ENCODE measurements at regions of chr1 and their contacts with region 1.

Region 1: GRCh38 chr1:10694633-10695627 is 101.5 kb downstream of the CASZ1 start:
- DNase-seq: peak; percentile 60 to 93 (median 73)
- ATAC-seq: peak; percentile 64
- H3K4me3 ChIP-seq: peak overlapping the region; percentile 32 to 48
- H3K4me3 Mint-ChIP-seq: peak overlapping the region; percentile 83
- H3K27ac ChIP-seq: no peak overlapping the region
- H3K27ac Mint-ChIP-seq: peak overlapping the region; percentile 88
- H3K4me1 ChIP-seq: peaks cover 17% of the 10 kb centered on the region
- H3K4me1 Mint-ChIP-seq: peaks cover 13% of the 10 kb centered on the region
- H3K27me3 ChIP-seq: no peaks in the 10 kb centered on the region
- H3K27me3 Mint-ChIP-seq: no peaks in the 10 kb centered on the region
- CTCF ChIP-seq: no peak

Region 2: DNA sequence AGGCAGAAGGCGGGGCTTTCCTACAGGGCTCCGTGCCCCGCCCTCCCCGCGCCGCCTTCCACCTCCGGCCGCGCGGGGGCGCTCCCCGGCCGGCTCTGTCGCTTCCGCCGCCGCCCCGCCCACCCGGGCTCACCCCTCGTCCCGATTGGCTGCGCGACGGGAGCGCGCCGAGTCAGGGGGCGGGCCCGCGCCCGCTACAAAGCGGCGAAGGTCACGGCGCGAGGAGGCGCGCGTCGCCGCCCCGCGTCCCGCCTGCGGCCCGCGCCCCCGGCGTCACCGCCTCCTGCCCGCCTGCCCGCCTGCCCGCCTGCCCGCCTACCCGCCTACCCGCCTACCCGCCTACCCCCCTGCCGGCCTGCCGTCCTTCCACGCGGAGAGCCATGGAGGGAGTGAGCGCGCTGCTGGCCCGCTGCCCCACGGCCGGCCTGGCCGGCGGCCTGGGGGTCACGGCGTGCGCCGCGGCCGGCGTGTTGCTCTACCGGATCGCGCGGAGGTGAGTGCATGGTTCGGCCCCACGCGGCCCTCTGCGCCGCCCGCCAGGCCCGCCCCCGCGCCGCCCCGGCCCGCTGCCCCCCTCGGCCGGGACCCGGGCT is 1106.3 kb before region 1 on chr1 and contains the start of gene TMEM201:
- CTCF ChIA-PET with region 1: no interaction called
- POLR2A ChIA-PET with region 1: no interaction called
- intact Hi-C with region 1: loop called (anchors 5 to 10 kb)
- DNase-seq: peak; percentile 87 to 97 (median 95)
- ATAC-seq: peak; percentile 94
- H3K4me3 ChIP-seq: peak within 1 kb of the TSS; percentile 53 to 59
- H3K4me3 Mint-ChIP-seq: peak within 1 kb of the TSS; percentile 88
- H3K27ac ChIP-seq: peak within 1 kb of the TSS; percentile 21 to 32
- H3K27ac Mint-ChIP-seq: peak within 1 kb of the TSS; percentile 74
- H3K4me1 ChIP-seq: peaks cover 22% of the 10 kb centered on the region
- H3K4me1 Mint-ChIP-seq: peaks cover 24% of the 10 kb centered on the region
- H3K27me3 ChIP-seq: no peaks in the 10 kb centered on the region
- H3K27me3 Mint-ChIP-seq: no peaks in the 10 kb centered on the region
- CTCF ChIP-seq: peak; percentile 77
- total RNA-seq, gene TMEM201: 10.7 to 11.5 TPM

Region 3: GRCh38 chr1:10472220-10473144 is 222.4 kb before region 1 on chr1 and contains the start of gene DFFA:
- CTCF ChIA-PET with region 1: no interaction called
- POLR2A ChIA-PET with region 1: no interaction called
- intact Hi-C with region 1: loop called in 1 of 2 experiments (anchors 1 kb)
- DNase-seq: peak; percentile 83 to 96 (median 91)
- ATAC-seq: peak; percentile 75
- H3K4me3 ChIP-seq: peak within 1 kb of the TSS; percentile 62 to 81
- H3K4me3 Mint-ChIP-seq: peak within 1 kb of the TSS; percentile 92
- H3K27ac ChIP-seq: peak within 1 kb of the TSS; percentile 39 to 66
- H3K27ac Mint-ChIP-seq: peak within 1 kb of the TSS; percentile 90
- H3K4me1 ChIP-seq: peaks cover 34% of the 10 kb centered on the region
- H3K4me1 Mint-ChIP-seq: peaks cover 47% of the 10 kb centered on the region
- H3K27me3 ChIP-seq: no peaks in the 10 kb centered on the region
- H3K27me3 Mint-ChIP-seq: no peaks in the 10 kb centered on the region
- CTCF ChIP-seq: no peak
- total RNA-seq, gene DFFA: 10.0 to 10.4 TPM

Region 4: DNA sequence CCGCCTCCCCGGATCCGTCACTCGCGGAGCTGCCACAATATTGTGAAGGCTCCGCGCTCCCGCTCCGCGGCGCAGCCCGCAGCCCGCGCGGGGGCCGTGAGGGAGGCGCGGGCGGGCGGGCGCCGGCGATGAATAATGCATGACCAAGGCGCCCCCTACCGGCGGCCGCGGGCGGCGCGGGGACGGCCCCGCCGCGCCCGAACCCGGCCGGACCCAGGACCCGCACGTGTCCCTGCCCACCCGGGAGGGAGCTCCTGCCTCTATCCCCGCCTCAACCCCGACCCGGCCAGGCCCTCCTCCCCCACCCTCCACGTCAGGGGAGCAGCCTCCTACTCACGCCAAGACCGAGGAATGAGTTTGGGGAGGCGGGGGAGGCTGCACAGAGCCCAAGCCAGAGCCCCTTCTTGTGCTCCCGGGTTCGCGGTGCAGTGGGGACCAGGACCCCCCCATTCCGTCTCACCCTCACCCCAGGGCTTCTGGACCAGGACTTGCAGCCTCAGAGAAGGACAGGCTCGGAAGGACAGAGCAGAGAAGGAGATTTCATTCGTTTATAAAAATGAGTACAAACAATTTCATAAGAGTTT is 172.3 kb after region 1 on chr1:
- CTCF ChIA-PET with region 1: interaction called, 8 read pairs
- POLR2A ChIA-PET with region 1: no interaction called
- intact Hi-C with region 1: loop called (anchors 1 kb)
- DNase-seq: peak; percentile 23 to 82 (median 69)
- ATAC-seq: peak; percentile 81
- H3K4me3 ChIP-seq: peak overlapping the region; percentile 21 to 28
- H3K4me3 Mint-ChIP-seq: peak overlapping the region; percentile 57
- H3K27ac ChIP-seq: no peak overlapping the region
- H3K27ac Mint-ChIP-seq: no peak overlapping the region
- H3K4me1 ChIP-seq: peaks cover 12% of the 10 kb centered on the region
- H3K4me1 Mint-ChIP-seq: peaks cover 19% of the 10 kb centered on the region
- H3K27me3 ChIP-seq: peaks cover 2 to 15% of the 10 kb centered on the region in 2 experiments
- H3K27me3 Mint-ChIP-seq: peaks cover 52% of the 10 kb centered on the region
- CTCF ChIP-seq: peak; percentile 74

Region 5: GRCh38 chr1:10941891-10942541 is 247.1 kb after region 1 on chr1:
- CTCF ChIA-PET with region 1: interaction called, 5 read pairs
- POLR2A ChIA-PET with region 1: no interaction called
- intact Hi-C with region 1: loop called (anchors 1 kb)
- DNase-seq: peak; percentile 47 to 78 (median 70)
- ATAC-seq: peak; percentile 75
- H3K4me3 ChIP-seq: no peak overlapping the region
- H3K4me3 Mint-ChIP-seq: no peak overlapping the region
- H3K27ac ChIP-seq: no peak overlapping the region
- H3K27ac Mint-ChIP-seq: no peak overlapping the region
- H3K4me1 ChIP-seq: peaks cover 43% of the 10 kb centered on the region
- H3K4me1 Mint-ChIP-seq: peaks cover 41% of the 10 kb centered on the region
- H3K27me3 ChIP-seq: peaks cover 6 to 7% of the 10 kb centered on the region in 2 experiments
- H3K27me3 Mint-ChIP-seq: peaks cover 25% of the 10 kb centered on the region
- CTCF ChIP-seq: peak; percentile 82

Region 6: GRCh38 chr1:11099310-11100149 is 404.6 kb after region 1 on chr1 and contains the start of gene EXOSC10:
- CTCF ChIA-PET with region 1: no interaction called
- POLR2A ChIA-PET with region 1: no interaction called
- intact Hi-C with region 1: loop called in 1 of 2 experiments (anchors 10 kb)
- DNase-seq: peak; percentile 88 to 97 (median 95)
- ATAC-seq: peak; percentile 97
- H3K4me3 ChIP-seq: peak within 1 kb of the TSS; percentile 70 to 86
- H3K4me3 Mint-ChIP-seq: peak within 1 kb of the TSS; percentile 87
- H3K27ac ChIP-seq: peak within 1 kb of the TSS; percentile 60 to 84
- H3K27ac Mint-ChIP-seq: peak within 1 kb of the TSS; percentile 96
- H3K4me1 ChIP-seq: peaks cover 12% of the 10 kb centered on the region
- H3K4me1 Mint-ChIP-seq: peaks cover 17% of the 10 kb centered on the region
- H3K27me3 ChIP-seq: no peaks in the 10 kb centered on the region
- H3K27me3 Mint-ChIP-seq: no peaks in the 10 kb centered on the region
- CTCF ChIP-seq: no peak
- total RNA-seq, gene EXOSC10: 95.0 to 98.1 TPM